ENCODE measurements at regions of chr17 and their contacts with region 1.

Region 1: GRCh38 chr17:50200457-50201275 is 765 bp downstream of the COL1A1 start:
- DNase-seq: peak; percentile 92 to 97 (median 95)
- ATAC-seq: peak; percentile 85 to 86
- H3K4me3 ChIP-seq: peak overlapping the region; percentile 41
- H3K27ac ChIP-seq: peak overlapping the region; percentile 65
- H3K4me1 ChIP-seq: no peaks in the 10 kb centered on the region
- H3K27me3 ChIP-seq: no peaks in the 10 kb centered on the region

Region 2: DNA sequence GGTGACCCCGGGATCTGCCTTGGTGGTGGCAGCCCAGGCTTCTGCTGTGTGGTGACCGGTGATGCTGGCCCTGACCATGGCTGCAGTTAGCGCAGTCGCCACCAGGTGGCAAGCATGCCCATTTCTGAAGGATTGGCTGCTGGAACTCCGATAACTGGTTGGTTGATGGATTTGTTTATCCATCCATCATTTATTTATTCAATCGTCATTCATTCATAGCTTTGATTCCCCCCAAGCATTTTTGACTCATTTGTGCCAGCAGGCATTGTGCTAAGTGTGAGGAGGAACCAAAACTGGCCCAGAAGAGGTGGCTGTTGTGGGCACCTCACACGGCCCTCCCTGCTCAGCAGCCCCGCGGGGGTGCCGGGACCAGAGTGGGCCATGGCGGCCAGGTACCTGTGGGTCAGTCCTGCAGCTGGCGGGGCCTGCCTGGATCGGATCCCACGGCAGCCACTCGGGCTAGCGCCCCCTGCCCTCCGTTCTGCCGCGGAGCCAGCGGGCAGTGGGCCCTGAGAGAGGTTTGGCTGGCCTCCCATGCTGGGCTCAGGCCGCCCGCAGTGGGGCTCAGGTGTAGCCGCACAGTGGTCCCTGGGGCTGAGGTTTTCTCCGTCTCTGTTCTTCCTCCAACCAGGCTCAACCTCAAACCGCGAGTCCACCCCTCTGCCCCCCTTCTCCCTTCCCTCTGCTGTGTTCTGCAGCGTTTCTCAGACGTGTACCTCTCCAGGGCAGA is 173.6 kb before region 1 on chr17:
- intact Hi-C with region 1: no loop called
- DNase-seq: peak; percentile 82 to 94 (median 93)
- ATAC-seq: peak; percentile 78 to 84
- H3K4me3 ChIP-seq: no peak overlapping the region
- H3K27ac ChIP-seq: no peak overlapping the region
- H3K4me1 ChIP-seq: no peaks in the 10 kb centered on the region
- H3K27me3 ChIP-seq: no peaks in the 10 kb centered on the region

Region 3: GRCh38 chr17:50076591-50077235 is 124.0 kb before region 1 on chr17:
- intact Hi-C with region 1: no loop called
- DNase-seq: peak in 1 of 3 donors; percentile 47
- ATAC-seq: no peak
- H3K4me3 ChIP-seq: no peak overlapping the region
- H3K27ac ChIP-seq: no peak overlapping the region
- H3K4me1 ChIP-seq: no peaks in the 10 kb centered on the region
- H3K27me3 ChIP-seq: no peaks in the 10 kb centered on the region

Region 4: GRCh38 chr17:50139950-50140871 is 60.5 kb before region 1 on chr17:
- intact Hi-C with region 1: loop called in 1 of 4 experiments (anchors 10 kb)
- DNase-seq: peak; percentile 77 to 92 (median 89)
- ATAC-seq: peak; percentile 59 to 73
- H3K4me3 ChIP-seq: no peak overlapping the region
- H3K27ac ChIP-seq: peak overlapping the region; percentile 45
- H3K4me1 ChIP-seq: peaks cover 4% of the 10 kb centered on the region
- H3K27me3 ChIP-seq: no peaks in the 10 kb centered on the region

Region 5: GRCh38 chr17:50269477-50270434 is 69.1 kb after region 1 on chr17:
- intact Hi-C with region 1: loop called (anchors 1 to 5 kb)
- DNase-seq: peak; percentile 71 to 89 (median 84)
- ATAC-seq: peak; percentile 57 to 63
- H3K4me3 ChIP-seq: no peak overlapping the region
- H3K27ac ChIP-seq: peak overlapping the region; percentile 5
- H3K4me1 ChIP-seq: peaks cover 2% of the 10 kb centered on the region
- H3K27me3 ChIP-seq: no peaks in the 10 kb centered on the region

Region 6: GRCh38 chr17:50297407-50297865 is 96.8 kb after region 1 on chr17:
- intact Hi-C with region 1: loop called in 3 of 4 experiments (anchors 2 kb)
- DNase-seq: peak; percentile 77 to 89 (median 88)
- ATAC-seq: peak; percentile 86 to 94
- H3K4me3 ChIP-seq: no peak overlapping the region
- H3K27ac ChIP-seq: no peak overlapping the region
- H3K4me1 ChIP-seq: no peaks in the 10 kb centered on the region
- H3K27me3 ChIP-seq: no peaks in the 10 kb centered on the region